Naive thymus-derived CD4-positive, alpha-beta T cell (primary cell): ENCODE measurements at regions of chr10 and their contacts with region 1.

Region 1: GRCh38 chr10:92848441-92849233 is at the start of gene EXOC6:
- DNase-seq: peak; percentile 78 to 93 (median 91)
- ATAC-seq: peak; percentile 91
- H3K4me3 ChIP-seq: peak within 1 kb of the TSS; percentile 70
- H3K4me3 Mint-ChIP-seq: peak within 1 kb of the TSS; percentile 81 to 94 (median 91)
- H3K27ac ChIP-seq: peak within 1 kb of the TSS; percentile 95
- H3K27ac Mint-ChIP-seq: peak within 1 kb of the TSS; percentile 56 to 95 (median 92)
- H3K4me1 ChIP-seq: peaks cover 7 to 19% of the 10 kb centered on the region in 2 donors
- H3K4me1 Mint-ChIP-seq: peaks cover 4 to 48% (median 36%) of the 10 kb centered on the region in 7 donors
- H3K27me3 ChIP-seq: no peaks in the 10 kb centered on the region
- H3K27me3 Mint-ChIP-seq: no peaks in the 10 kb centered on the region
- total RNA-seq, gene EXOC6: 8.1 to 12.1 (median 11.4) TPM

Region 2: DNA sequence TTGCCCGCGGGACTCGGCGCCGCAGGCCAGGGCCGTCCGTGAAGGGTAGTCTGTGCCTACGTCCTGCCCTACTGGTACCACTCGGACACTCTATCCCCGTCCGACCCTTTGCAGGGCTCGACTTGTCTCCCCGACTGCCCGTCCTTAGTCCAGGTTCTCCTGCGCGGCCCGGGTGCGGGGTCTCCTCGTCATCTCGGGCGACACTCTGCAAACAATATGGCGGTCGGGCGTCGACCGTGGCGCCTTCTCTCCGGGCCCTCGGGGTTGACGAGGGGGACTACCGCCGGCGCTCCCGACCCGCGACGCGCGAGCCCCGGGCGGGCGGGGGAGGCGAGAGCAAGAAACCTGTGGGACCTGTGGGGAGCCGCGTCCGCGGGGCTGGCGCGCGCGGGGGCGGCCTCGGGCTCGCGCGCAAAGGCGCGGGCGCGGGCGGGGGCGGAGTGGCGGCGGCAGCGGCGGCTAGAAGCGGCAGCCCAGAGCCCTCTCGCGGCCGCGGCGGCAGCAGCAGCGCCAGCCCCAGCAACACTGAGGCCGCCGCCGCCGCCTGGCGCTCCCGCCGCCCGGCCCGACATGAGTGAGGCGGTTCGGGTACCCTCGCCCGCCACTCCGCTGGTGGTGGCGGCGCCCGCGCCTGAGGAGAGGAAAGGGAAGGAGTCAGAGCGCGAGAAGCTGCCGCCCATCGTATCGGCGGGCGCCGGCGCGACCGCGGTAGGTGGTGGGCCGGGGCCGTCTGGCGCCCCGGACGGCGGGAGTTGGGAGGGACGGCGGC is 1438.6 kb before region 1 on chr10 and contains the start of gene HECTD2:
- CTCF ChIA-PET with region 1: no interaction called
- POLR2A ChIA-PET with region 1: no interaction called
- intact Hi-C with region 1: loop called in 1 of 2 experiments (anchors 1 kb)
- DNase-seq: peak; percentile 76 to 89 (median 86)
- ATAC-seq: peak; percentile 93
- H3K4me3 ChIP-seq: peak within 1 kb of the TSS; percentile 83
- H3K4me3 Mint-ChIP-seq: peak within 1 kb of the TSS; percentile 75 to 93 (median 90)
- H3K27ac ChIP-seq: peak within 1 kb of the TSS; percentile 88
- H3K27ac Mint-ChIP-seq: peak within 1 kb of the TSS; percentile 81 to 96 (median 91)
- H3K4me1 ChIP-seq: peaks cover 8 to 17% of the 10 kb centered on the region in 2 donors
- H3K4me1 Mint-ChIP-seq: peaks cover 8 to 18% (median 13%) of the 10 kb centered on the region in 7 donors
- H3K27me3 ChIP-seq: no peaks in the 10 kb centered on the region
- H3K27me3 Mint-ChIP-seq: peaks cover 0 to 27% (median 0%) of the 10 kb centered on the region in 5 donors
- total RNA-seq, gene HECTD2: 1.1 to 4.6 (median 2.0) TPM

Region 3: DNA sequence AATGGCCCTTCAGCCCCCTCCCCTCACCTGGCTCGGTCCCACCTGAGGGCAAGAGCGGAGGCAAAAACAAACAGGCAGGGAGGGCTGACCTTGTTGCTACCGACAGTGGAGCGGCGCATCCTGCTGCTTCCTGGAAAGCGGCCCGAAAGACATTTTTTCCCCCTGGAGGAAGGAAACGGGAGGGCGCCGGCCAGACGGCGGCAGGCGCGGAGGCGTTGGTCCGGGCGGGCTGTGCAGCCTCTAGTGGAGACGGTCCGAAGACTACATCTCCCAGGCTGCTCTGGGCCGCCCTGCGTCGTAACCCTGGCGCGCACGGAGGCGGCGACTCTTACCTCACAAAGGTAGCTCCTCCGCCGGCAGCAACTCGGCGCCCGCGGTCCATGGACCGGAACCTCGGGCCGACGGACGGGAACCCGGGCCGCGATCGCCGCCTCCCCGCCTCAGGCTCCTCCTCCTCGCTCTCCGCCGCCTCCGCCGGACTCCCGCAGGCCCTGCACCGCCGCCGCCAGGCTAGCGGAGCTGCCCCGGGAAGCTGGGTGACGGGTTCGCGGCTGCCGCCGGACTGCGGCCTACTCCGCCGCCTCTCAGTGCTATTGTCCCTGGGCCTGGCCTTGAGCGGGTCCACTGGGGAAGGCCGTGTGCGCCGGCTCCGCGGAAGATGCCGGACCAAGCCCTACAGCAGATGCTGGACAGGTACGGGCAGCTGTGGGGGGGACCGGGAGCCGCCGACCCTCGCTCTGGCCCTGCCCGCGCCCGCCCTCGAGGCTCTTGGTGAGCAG is 557.6 kb before region 1 on chr10 and contains the starts of genes CPEB3 and MARCHF5:
- CTCF ChIA-PET with region 1: no interaction called
- POLR2A ChIA-PET with region 1: no interaction called
- intact Hi-C with region 1: loop called in 1 of 2 experiments (anchors 2 kb)
- DNase-seq: peak; percentile 77 to 92 (median 85)
- ATAC-seq: peak; percentile 99
- H3K4me3 ChIP-seq: peak within 1 kb of the TSS; percentile 90
- H3K4me3 Mint-ChIP-seq: peak within 1 kb of the TSS; percentile 85 to 97 (median 95)
- H3K27ac ChIP-seq: peak within 1 kb of the TSS; percentile 90
- H3K27ac Mint-ChIP-seq: peak within 1 kb of the TSS; percentile 75 to 96 (median 88)
- H3K4me1 ChIP-seq: peaks cover 0 to 6% of the 10 kb centered on the region in 2 donors
- H3K4me1 Mint-ChIP-seq: peaks cover 21 to 41% (median 31%) of the 10 kb centered on the region in 7 donors
- H3K27me3 ChIP-seq: no peaks in the 10 kb centered on the region
- H3K27me3 Mint-ChIP-seq: no peaks in the 10 kb centered on the region
- total RNA-seq, gene CPEB3: 2.0 to 3.3 (median 2.2) TPM
- total RNA-seq, gene MARCHF5: 22.0 to 37.1 (median 33.8) TPM

Region 4: DNA sequence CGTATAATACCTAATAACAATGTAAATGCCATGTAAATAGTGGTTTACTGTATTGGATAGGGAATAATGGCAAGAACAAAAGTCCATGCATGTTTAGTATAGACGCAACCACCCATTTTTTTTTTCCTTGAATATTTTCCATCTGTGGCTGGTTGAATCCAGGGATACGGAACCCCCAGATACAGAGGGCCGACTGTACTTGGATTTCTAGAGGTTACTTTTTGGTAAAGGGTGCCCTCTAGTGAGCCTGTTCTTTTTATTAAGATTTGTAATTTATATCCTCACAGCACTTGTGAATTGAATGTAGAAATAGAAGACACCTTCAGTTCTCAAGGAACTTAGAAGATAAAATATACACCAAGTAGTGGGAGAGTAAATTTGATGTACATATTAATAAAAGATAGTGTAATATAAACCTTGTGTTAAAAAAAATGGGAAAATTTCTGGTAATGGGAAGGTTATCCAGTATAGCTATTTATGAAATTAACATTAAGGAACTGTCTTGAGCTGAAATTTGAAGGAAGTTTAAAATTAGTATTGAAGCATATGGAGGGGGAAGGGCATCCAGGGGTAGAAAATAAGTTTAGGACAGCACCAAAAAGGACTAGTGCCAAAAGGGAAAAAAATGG is 31.7 kb after region 1 on chr10:
- CTCF ChIA-PET with region 1: interaction called, 23 read pairs
- POLR2A ChIA-PET with region 1: interaction called, 3 read pairs
- intact Hi-C with region 1: loop called (anchors 1 kb)
- DNase-seq: peak in 6 of 9 donors; percentile 7 to 40 (median 32)
- ATAC-seq: peak; percentile 62
- H3K4me3 ChIP-seq: no peak overlapping the region
- H3K4me3 Mint-ChIP-seq: no peak overlapping the region
- H3K27ac ChIP-seq: no peak overlapping the region
- H3K27ac Mint-ChIP-seq: peak overlapping the region in 2 of 9 donors; percentile 0 to 20
- H3K4me1 ChIP-seq: peaks cover 0 to 11% of the 10 kb centered on the region in 2 donors
- H3K4me1 Mint-ChIP-seq: peaks cover 18 to 42% (median 31%) of the 10 kb centered on the region in 7 donors
- H3K27me3 ChIP-seq: no peaks in the 10 kb centered on the region
- H3K27me3 Mint-ChIP-seq: no peaks in the 10 kb centered on the region

Region 5: GRCh38 chr10:93496322-93497041 is 647.8 kb after region 1 on chr10 and contains the start of gene CEP55:
- CTCF ChIA-PET with region 1: no interaction called
- POLR2A ChIA-PET with region 1: no interaction called
- intact Hi-C with region 1: loop called (anchors 1 kb)
- DNase-seq: peak; percentile 90 to 97 (median 94)
- ATAC-seq: peak; percentile 100
- H3K4me3 ChIP-seq: peak within 1 kb of the TSS; percentile 100
- H3K4me3 Mint-ChIP-seq: peak within 1 kb of the TSS; percentile 84 to 95 (median 92)
- H3K27ac ChIP-seq: no peak within 1 kb of the TSS
- H3K27ac Mint-ChIP-seq: peak within 1 kb of the TSS in 8 of 9 donors; percentile 13 to 90 (median 72)
- H3K4me1 ChIP-seq: peaks cover 7 to 11% of the 10 kb centered on the region in 2 donors
- H3K4me1 Mint-ChIP-seq: peaks cover 0 to 48% (median 12%) of the 10 kb centered on the region in 7 donors
- H3K27me3 ChIP-seq: no peaks in the 10 kb centered on the region
- H3K27me3 Mint-ChIP-seq: peaks cover 0 to 9% (median 7%) of the 10 kb centered on the region in 5 donors
- total RNA-seq, gene CEP55: 0.54 to 48.6 TPM in 2 of 5 experiments, not detected in the others